OCI-LY7 (cell line): ENCODE measurements at regions of chr5 and their contacts with region 1.

Region 1: GRCh38 chr5:157567032-157567431 is 8.5 kb downstream of the ADAM19 start:
- DNase-seq: no peak
- H3K4me3 ChIP-seq: no peak overlapping the region
- H3K27ac ChIP-seq: no peak overlapping the region
- H3K4me1 ChIP-seq: peaks cover 24% of the 10 kb centered on the region
- CTCF ChIP-seq: no peak

Region 2: DNA sequence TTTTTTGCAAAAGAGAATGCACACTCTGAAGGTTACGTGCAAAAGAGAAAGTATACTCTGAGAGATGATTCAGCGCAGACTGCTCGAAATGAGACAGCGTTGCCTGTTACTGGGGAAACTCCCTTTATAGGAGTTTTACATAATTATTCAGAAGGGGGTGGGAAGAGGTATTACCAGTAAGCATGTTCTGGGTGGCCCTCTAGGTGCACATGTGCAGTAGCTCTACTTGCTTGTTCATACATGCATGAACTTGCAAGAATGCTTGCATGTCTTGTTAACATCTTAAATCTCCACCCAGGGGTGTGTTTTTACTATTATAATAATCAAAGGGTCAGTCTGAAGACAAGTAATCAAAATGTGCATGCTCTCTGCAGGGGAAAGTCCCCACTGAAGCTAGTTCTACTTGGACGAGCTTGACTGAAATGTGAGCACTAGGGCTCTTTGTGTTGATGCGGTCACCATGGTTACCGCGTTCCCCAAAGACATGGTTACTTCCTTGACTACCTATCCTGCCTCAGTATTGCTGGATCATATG is 1164.6 kb before region 1 on chr5:
- CTCF ChIA-PET with region 1: no interaction called
- POLR2A ChIA-PET with region 1: no interaction called
- intact Hi-C with region 1: no loop called
- DNase-seq: peak; percentile 28
- H3K4me3 ChIP-seq: no peak overlapping the region
- H3K27ac ChIP-seq: no peak overlapping the region
- H3K4me1 ChIP-seq: no peaks in the 10 kb centered on the region
- CTCF ChIP-seq: no peak

Region 3: DNA sequence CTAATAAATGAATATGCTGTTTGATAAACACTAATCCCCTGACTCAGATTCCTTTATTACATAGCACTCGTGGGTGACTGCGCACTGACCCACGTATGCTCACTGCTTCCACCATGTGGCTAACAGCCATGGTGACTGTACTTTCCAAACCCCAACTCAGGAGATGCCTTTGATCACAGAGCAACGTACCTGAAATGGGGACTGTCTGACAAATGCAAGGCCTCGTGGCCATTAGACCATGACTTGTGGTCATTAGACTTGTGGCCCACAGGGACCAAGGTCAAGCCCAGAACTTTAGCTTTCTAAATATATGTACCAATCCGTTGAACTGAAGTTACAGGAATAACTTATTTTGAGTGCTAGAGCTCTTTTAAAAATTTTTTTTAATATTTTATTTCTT is 254.5 kb before region 1 on chr5:
- CTCF ChIA-PET with region 1: no interaction called
- POLR2A ChIA-PET with region 1: no interaction called
- intact Hi-C with region 1: no loop called
- DNase-seq: peak; percentile 72
- H3K4me3 ChIP-seq: no peak overlapping the region
- H3K27ac ChIP-seq: no peak overlapping the region
- H3K4me1 ChIP-seq: peaks cover 3% of the 10 kb centered on the region
- CTCF ChIP-seq: peak; percentile 87

Region 4: GRCh38 chr5:157548513-157549297 is 18.3 kb before region 1 on chr5:
- CTCF ChIA-PET with region 1: no interaction called
- POLR2A ChIA-PET with region 1: interaction called, 28 read pairs
- intact Hi-C with region 1: no loop called
- DNase-seq: no peak
- H3K4me3 ChIP-seq: no peak overlapping the region
- H3K27ac ChIP-seq: no peak overlapping the region
- H3K4me1 ChIP-seq: peaks cover 24% of the 10 kb centered on the region
- CTCF ChIP-seq: no peak